ENCODE measurements at regions of chr9 and their contacts with region 1.

Region 1: GRCh38 chr9:112361601-112362000 is 18.3 kb upstream of the HSDL2 start:
- DNase-seq: no peak
- H3K4me3 Mint-ChIP-seq: no peak overlapping the region
- H3K27ac Mint-ChIP-seq: no peak overlapping the region
- H3K4me1 Mint-ChIP-seq: peaks cover 8% of the 10 kb centered on the region
- H3K27me3 Mint-ChIP-seq: peaks cover 9% of the 10 kb centered on the region

Region 2: DNA sequence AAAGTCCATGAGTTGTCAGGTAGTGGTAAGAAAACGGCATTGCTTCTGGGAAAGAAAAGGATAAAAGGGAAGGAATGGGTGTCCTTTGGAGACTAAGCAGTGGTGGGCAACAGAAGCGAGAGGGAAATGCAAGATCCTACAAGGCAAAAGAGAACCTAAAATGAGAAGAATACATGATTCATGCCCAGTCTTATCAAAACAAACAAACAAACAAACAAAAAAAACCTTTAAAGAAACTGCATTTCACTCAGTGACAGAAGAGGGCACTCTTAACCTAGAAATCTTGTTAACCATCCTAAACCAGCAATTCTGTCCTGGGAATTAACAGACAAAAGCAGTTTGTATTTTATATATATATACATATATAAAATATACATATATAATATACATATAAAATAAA is 275.0 kb before region 1 on chr9:
- CTCF ChIA-PET with region 1: interaction called, 67 read pairs
- POLR2A ChIA-PET with region 1: no interaction called
- DNase-seq: no peak
- H3K4me3 Mint-ChIP-seq: no peak overlapping the region
- H3K27ac Mint-ChIP-seq: no peak overlapping the region
- H3K4me1 Mint-ChIP-seq: peaks cover 2% of the 10 kb centered on the region
- H3K27me3 Mint-ChIP-seq: no peaks in the 10 kb centered on the region

Region 3: GRCh38 chr9:112112941-112113681 is 248.5 kb before region 1 on chr9:
- CTCF ChIA-PET with region 1: interaction called, 17 read pairs
- POLR2A ChIA-PET with region 1: no interaction called
- DNase-seq: peak; percentile 29
- H3K4me3 Mint-ChIP-seq: no peak overlapping the region
- H3K27ac Mint-ChIP-seq: no peak overlapping the region
- H3K4me1 Mint-ChIP-seq: no peaks in the 10 kb centered on the region
- H3K27me3 Mint-ChIP-seq: no peaks in the 10 kb centered on the region

Measured in activated CD4-positive, alpha-beta memory T cell treated with anti-CD3 and anti-CD28 coated beads, Interleukin-2, amount 10 ng/mL, durations not matched to agents 7 days and 5 days (primary cell).